Mammary epithelial cell (primary cell): ENCODE measurements at regions of chr13 and their contacts with region 1.

Region 1: GRCh38 chr13:48094781-48095502 is at the start of gene MED4:
- DNase-seq: peak; percentile 92
- H3K4me3 ChIP-seq: peak within 1 kb of the TSS; percentile 73 to 98 (median 86)
- H3K27ac ChIP-seq: peak within 1 kb of the TSS; percentile 83
- H3K4me1 ChIP-seq: peaks cover 10% of the 10 kb centered on the region
- H3K27me3 ChIP-seq: no peaks in the 10 kb centered on the region
- CTCF ChIP-seq: peak; percentile 98 to 100
- total RNA-seq, gene MED4: 24.8 to 43.1 TPM

Region 2: GRCh38 chr13:48000778-48001628 is 93.9 kb before region 1 on chr13 and contains the start of gene SUCLA2:
- CTCF ChIA-PET with region 1: interaction called, 4 read pairs
- dilution Hi-C with region 1: no loop called
- in situ Hi-C with region 1: no loop called
- intact Hi-C with region 1: loop called (anchors 10 kb)
- DNase-seq: peak; percentile 84
- H3K4me3 ChIP-seq: peak within 1 kb of the TSS; percentile 82 to 94 (median 93)
- H3K27ac ChIP-seq: peak within 1 kb of the TSS; percentile 94
- H3K4me1 ChIP-seq: peaks cover 13% of the 10 kb centered on the region
- H3K27me3 ChIP-seq: no peaks in the 10 kb centered on the region
- CTCF ChIP-seq: no peak
- total RNA-seq, gene SUCLA2: 44.1 to 61.8 TPM

Region 3: DNA sequence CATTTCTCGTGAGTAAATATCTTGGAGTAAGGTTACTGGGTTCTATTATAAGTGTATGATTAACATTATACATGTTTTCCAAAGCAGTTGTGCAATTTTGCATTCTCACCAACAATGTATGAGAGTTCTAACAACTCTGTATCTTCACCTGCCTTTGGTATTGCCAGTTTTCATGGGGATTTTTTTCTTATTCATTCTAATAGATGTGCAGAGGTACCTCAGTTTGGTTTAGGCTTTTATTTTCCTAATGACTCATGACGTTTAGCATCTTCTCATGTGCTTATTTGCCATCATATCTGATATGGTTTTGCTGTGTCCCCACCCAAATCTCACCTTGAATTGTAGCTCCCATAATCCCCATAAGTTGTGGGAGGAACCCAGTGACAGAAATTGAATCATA is 65.1 kb before region 1 on chr13:
- CTCF ChIA-PET with region 1: no interaction called
- dilution Hi-C with region 1: no loop called
- in situ Hi-C with region 1: no loop called
- intact Hi-C with region 1: no loop called
- DNase-seq: no peak
- H3K4me3 ChIP-seq: no peak overlapping the region
- H3K27ac ChIP-seq: no peak overlapping the region
- H3K4me1 ChIP-seq: no peaks in the 10 kb centered on the region
- H3K27me3 ChIP-seq: no peaks in the 10 kb centered on the region
- CTCF ChIP-seq: no peak